ENCODE measurements at regions of chr16 and their contacts with region 1.

Region 1: DNA sequence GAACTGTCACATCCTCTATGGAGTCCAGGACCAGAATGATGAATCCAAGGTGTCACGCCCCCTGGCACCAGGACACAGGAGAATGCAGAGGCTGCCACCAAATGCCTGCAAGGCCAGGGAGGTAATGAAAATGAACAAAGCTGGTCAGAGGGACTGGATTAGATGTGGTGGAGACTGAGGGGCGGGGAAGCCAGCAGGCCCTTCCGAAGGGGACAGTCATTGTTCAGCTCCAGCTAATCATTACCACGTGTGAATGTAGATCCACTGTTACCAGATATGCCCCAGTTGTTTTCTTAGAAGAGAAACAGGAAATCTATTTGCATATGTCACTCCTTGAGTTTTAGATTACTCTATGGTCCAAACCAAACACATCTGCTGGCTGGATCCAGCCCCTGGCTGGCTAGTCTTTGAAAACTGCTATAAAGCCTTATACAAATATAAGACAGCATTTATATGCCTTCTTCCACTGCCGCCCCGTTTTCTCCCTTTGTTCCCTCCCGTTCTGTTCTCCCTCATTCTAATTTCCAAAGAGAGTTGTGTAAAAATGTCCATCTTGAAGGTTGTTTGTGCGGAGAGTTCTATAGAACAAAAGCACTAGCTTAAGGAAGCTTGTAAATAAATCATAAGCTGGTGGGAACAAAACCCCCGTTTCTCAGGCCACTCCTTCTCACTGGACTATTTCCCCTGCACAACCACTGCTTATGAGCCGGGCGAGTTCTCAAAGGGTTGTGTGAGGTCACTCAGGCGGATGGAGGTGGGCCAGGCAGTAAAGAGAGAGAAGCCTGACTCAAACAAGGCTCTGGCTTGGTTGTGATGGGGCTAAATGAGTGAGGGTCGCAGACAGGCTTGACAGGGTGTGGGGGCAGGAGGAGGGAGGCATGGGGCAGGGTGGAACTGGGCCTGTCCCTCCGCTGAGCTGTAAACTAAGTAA is 14.2 kb downstream of the CRYM start:
- DNase-seq: peak; percentile 86 to 96
- H3K4me3 ChIP-seq: no peak overlapping the region
- H3K4me1 ChIP-seq: peaks cover 13% of the 10 kb centered on the region
- H3K27me3 ChIP-seq: no peaks in the 10 kb centered on the region

Region 2: GRCh38 chr16:20243731-20244281 is 1020.1 kb before region 1 on chr16:
- in situ Hi-C with region 1: no loop called
- DNase-seq: no peak
- H3K4me3 ChIP-seq: no peak overlapping the region
- H3K4me1 ChIP-seq: no peaks in the 10 kb centered on the region
- H3K27me3 ChIP-seq: no peaks in the 10 kb centered on the region

Region 3: GRCh38 chr16:21203155-21203797 is 60.6 kb before region 1 on chr16:
- in situ Hi-C with region 1: loop called (anchors 10 kb)
- DNase-seq: no peak
- H3K4me3 ChIP-seq: no peak overlapping the region
- H3K4me1 ChIP-seq: no peaks in the 10 kb centered on the region
- H3K27me3 ChIP-seq: no peaks in the 10 kb centered on the region